IMR-90 (cell line): ENCODE measurements at regions of chr17 and their contacts with region 1.

Region 1: DNA sequence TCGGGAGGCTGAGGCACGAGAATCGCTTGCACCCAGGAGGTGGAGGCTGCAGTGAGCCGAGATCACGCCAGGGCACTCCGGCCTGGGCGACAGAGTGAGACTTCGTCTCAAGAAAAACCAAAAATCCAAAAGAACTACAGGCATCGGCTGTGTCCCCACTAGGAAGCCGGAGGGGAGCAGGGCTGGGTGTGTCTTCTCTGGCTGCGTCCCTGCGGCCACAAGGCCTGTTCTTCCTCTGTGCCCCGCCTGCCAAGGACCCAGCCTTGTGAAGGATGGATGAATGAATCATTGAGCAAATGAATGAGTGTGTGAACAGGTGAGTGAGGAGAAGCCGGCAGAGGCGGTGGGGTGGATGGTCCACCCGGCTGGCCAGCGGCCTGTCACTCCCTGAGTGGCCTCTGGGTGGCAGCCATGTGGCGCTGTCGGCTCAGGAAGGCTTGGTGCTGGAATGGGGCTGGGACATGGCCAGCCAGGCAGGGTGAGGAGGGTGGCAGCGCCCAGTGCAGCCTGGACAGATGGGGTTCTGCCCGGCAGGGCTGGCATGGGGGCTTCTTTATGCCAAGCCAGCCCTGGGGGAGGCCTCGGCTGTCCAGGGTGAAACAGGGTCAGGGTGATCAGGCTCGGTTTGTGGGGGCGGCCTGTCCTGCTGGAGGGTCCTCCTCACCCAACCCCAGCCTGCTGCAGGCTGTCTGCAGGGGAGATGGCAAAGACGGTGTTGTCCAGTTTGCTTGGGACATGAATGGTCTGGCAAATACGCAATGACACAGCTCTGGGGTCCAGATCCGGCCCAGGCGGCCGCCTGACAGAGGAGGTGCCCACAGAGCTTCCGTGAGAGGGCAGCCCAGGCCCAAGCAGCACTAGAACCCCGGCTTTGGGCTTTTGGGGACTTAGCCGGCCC is 21.7 kb downstream of the SLC25A10 start:
- DNase-seq: peak; percentile 55
- ATAC-seq: peak; percentile 99
- H3K4me3 ChIP-seq: no peak overlapping the region
- H3K27ac ChIP-seq: no peak overlapping the region
- H3K4me1 ChIP-seq: peaks cover 5% of the 10 kb centered on the region
- H3K27me3 ChIP-seq: no peaks in the 10 kb centered on the region; the same call in 1 of the 2 replicates
- CTCF ChIP-seq: peak; percentile 94
- POLR2A ChIP-seq: no peak
- RAD21 ChIP-seq: peak; percentile 96

Region 2: DNA sequence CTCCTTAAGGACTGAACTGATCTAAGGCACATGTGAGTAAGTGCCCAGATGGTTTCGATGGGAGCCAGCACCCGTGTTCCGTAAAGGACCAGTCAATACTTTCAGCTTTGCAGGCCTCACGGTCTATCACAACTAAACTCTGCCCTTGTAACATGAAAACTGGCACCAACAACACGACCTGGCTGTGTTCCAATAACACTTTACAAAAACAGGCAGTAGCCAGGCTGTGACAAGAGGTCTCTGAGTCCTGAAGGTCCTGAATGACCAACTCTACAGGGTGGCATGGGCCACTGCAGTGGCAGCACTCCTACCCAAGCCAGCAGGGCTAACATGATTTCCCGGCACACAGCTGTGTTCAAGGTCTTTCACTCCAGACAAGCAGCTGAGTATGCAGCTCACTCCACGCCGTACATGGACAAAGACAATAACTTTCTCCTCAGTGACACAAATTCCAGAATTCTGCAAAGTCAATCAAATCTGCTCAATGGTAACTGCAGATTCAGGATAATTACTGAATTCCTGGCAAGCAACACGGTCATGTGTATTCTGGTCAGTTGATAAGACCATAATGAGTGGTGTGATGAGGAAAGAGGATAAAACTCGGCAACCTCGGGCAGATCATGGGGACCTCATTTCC is 112.1 kb before region 1 on chr17:
- CTCF ChIA-PET with region 1: no interaction called
- POLR2A ChIA-PET with region 1: no interaction called
- dilution Hi-C with region 1: no loop called
- in situ Hi-C with region 1: no loop called
- intact Hi-C with region 1: no loop called
- DNase-seq: no peak
- ATAC-seq: no peak
- H3K4me3 ChIP-seq: no peak overlapping the region
- H3K27ac ChIP-seq: no peak overlapping the region
- H3K4me1 ChIP-seq: no peaks in the 10 kb centered on the region
- H3K27me3 ChIP-seq: no peaks in the 10 kb centered on the region
- CTCF ChIP-seq: no peak
- POLR2A ChIP-seq: no peak
- RAD21 ChIP-seq: no peak

Region 3: GRCh38 chr17:81854974-81855774 is 121.4 kb after region 1 on chr17:
- CTCF ChIA-PET with region 1: no interaction called
- POLR2A ChIA-PET with region 1: interaction called, 14 read pairs
- dilution Hi-C with region 1: no loop called
- in situ Hi-C with region 1: no loop called
- intact Hi-C with region 1: no loop called
- DNase-seq: no peak
- ATAC-seq: no peak
- H3K4me3 ChIP-seq: no peak overlapping the region
- H3K27ac ChIP-seq: no peak overlapping the region
- H3K4me1 ChIP-seq: peaks cover 16% of the 10 kb centered on the region
- H3K27me3 ChIP-seq: no peaks in the 10 kb centered on the region
- CTCF ChIP-seq: no peak
- POLR2A ChIP-seq: no peak
- RAD21 ChIP-seq: no peak

Region 4: DNA sequence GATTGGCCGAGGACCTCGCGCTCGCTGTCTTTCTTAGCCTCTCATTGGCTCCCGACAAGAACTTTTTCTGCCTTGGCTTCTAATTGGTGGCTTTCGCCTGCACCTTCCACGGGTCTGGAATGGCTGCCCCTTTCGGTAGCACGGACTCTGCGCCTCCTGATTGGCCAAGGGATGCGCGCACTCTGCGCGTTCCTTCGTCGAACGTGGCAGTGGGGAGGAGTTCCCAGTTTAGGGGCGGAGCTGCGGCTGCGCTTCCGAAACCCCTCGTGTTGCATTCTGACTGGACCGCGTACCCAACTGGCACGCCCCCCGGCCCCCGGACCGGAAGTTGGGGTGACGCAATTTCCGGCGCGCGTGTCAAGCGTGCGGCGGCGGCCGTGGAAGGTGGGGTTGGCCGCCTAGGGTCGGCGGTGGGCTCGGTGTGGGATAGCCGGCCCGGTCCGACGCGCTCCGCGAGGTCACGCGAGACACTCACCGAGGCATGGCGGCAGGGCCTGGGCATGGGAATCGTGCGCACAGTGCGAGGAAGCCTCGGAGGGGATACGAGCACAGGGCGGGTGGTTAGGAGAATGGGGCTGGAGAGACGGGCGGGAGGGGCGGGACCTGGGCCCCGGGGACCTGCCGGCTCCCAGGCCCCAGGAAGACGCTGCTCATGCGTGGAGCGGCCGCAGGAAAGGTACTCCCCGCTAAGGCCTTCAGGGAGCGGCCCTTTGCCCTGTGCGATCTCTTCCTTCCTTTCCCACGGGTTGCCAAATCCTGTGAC is 127.2 kb after region 1 on chr17:
- CTCF ChIA-PET with region 1: no interaction called
- POLR2A ChIA-PET with region 1: interaction called, 4 read pairs
- dilution Hi-C with region 1: no loop called
- in situ Hi-C with region 1: no loop called
- intact Hi-C with region 1: loop called (anchors 1 kb)
- DNase-seq: peak; percentile 100
- ATAC-seq: peak; percentile 89
- H3K4me3 ChIP-seq: peak overlapping the region; percentile 73
- H3K27ac ChIP-seq: peak overlapping the region; percentile 95
- H3K4me1 ChIP-seq: peaks cover 18% of the 10 kb centered on the region
- H3K27me3 ChIP-seq: no peaks in the 10 kb centered on the region
- CTCF ChIP-seq: no peak
- POLR2A ChIP-seq: peak; percentile 89
- RAD21 ChIP-seq: no peak